Spleen (tissue), 13 donors: ENCODE measurements at regions of chr3 and their contacts with region 1.

Region 1: DNA sequence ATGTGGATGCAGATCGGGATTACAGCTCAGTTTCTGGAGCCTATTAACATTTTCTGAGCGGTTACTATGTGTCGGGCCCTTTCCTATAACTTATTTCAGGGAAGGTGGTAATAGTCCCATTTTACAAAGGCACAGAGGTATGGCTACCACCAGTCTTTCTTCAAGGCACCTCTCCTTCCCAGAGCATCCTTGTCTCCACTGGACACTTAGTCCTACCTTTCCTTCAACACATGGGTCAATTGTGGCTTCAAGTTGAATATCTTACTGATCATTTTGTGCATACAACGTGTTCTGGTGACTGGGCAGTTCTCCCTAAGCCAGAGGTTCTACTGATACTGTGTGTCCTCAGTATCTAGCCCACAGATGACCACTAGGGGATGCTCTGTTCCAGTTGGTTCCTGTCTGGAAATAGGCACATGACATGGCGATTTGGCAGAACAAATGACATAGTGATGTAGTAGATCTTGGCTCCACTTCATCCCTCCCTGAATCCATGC is 60.7 kb upstream of the CMTM8 start:
- DNase-seq: no peak
- H3K4me3 ChIP-seq: no peak overlapping the region
- H3K27ac ChIP-seq: no peak overlapping the region
- H3K4me1 ChIP-seq: peaks cover 0 to 14% (median 12%) of the 10 kb centered on the region in 6 donors
- H3K27me3 ChIP-seq: no peaks in the 10 kb centered on the region
- CTCF ChIP-seq: peak in 10 of 11 experiments; percentile 20 to 62 (median 57)
- POLR2A ChIP-seq: no peak

Region 2: GRCh38 chr3:32296256-32297204 is 118.8 kb after region 1 on chr3:
- intact Hi-C with region 1: loop called (anchors 10 kb)
- DNase-seq: peak; percentile 84
- H3K4me3 ChIP-seq: no peak overlapping the region
- H3K27ac ChIP-seq: peak overlapping the region in 3 of 8 donors; percentile 21 to 56 (median 38)
- H3K4me1 ChIP-seq: peaks cover 0 to 20% (median 9%) of the 10 kb centered on the region in 6 donors
- H3K27me3 ChIP-seq: no peaks in the 10 kb centered on the region
- CTCF ChIP-seq: peak; percentile 78 to 89 (median 86)
- POLR2A ChIP-seq: no peak

Region 3: DNA sequence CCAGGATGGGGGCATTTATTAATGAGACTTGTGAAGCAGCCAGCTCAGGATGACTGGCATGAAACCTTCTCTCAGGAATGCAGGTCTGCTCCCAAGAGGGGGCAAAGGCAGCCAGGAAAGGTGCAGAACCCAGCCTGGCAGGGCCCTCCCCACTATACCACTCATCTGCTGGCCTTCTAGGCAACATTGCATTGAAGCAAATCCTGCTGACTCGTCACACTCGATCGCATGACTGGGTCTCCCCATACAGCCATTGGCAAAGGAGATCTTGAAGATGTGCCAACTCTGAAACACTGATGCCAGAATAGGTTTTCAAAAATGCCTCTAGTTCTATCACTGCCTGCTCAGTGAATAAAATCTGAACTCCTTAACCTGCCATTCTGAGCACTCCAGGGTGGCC is 148.2 kb after region 1 on chr3:
- intact Hi-C with region 1: no loop called
- DNase-seq: no peak
- H3K4me3 ChIP-seq: no peak overlapping the region
- H3K27ac ChIP-seq: no peak overlapping the region
- H3K4me1 ChIP-seq: peaks cover 0 to 3% (median 0%) of the 10 kb centered on the region in 6 donors
- H3K27me3 ChIP-seq: peaks cover 0 to 6% (median 0%) of the 10 kb centered on the region in 7 donors
- CTCF ChIP-seq: no peak
- POLR2A ChIP-seq: no peak

Region 4: DNA sequence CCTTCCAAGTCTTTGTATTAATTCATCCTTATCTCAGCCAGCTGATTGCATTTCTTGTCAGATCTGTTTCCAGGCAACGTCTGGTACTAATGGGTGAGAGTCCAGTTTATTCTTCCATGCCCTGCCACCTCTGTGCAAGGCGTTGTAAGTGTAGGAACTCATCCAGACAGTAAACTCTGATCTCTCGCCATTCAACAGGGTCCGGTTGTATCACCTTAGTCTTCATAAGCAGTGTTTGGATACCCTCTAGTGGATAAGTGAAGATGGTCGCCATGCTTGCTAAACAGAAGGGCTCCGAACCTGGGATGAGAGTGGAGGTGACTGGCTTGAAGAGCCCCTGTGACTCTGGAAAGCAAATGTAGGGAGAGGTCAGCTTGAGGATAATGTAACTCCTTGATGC is 162.3 kb after region 1 on chr3:
- intact Hi-C with region 1: loop called (anchors 5 kb)
- DNase-seq: no peak
- H3K4me3 ChIP-seq: no peak overlapping the region
- H3K27ac ChIP-seq: no peak overlapping the region
- H3K4me1 ChIP-seq: peaks cover 0 to 16% (median 9%) of the 10 kb centered on the region in 6 donors
- H3K27me3 ChIP-seq: no peaks in the 10 kb centered on the region
- CTCF ChIP-seq: peak in 8 of 11 experiments; percentile 28 to 50 (median 36)
- POLR2A ChIP-seq: no peak